ENCODE measurements at regions of chr5 and their contacts with region 1.

Region 1: DNA sequence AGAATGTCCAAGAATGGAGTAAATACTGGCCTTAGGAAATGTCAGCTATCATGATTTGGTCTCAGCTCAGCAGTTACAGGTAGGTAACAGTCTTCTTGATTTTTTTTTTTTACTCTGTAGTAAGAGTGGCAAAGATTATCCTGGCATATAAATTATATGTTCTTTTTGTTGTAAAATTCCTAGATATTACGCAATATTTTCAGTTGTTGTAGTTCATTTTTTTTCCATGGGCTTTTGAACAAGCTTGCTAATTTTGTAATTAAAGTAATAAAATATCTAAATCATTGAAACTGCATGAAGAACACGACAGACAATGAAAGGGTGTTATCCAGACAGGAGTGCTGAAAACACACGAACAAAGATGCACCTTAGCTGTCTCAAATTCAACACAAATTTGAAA is 249.4 kb downstream of the PRDM9 start:
- DNase-seq: no peak
- ATAC-seq: no peak
- H3K4me3 ChIP-seq: no peak overlapping the region
- H3K27ac ChIP-seq: no peak overlapping the region
- H3K4me1 ChIP-seq: no peaks in the 10 kb centered on the region
- H3K27me3 ChIP-seq: no peaks in the 10 kb centered on the region

Region 2: GRCh38 chr5:23684103-23684502 is 72.7 kb before region 1 on chr5:
- intact Hi-C with region 1: loop called in 1 of 4 experiments (anchors 5 kb)
- DNase-seq: no peak
- ATAC-seq: no peak
- H3K4me3 ChIP-seq: no peak overlapping the region
- H3K27ac ChIP-seq: no peak overlapping the region
- H3K4me1 ChIP-seq: no peaks in the 10 kb centered on the region
- H3K27me3 ChIP-seq: no peaks in the 10 kb centered on the region

Measured in right cardiac atrium (tissue), 5 donors.